MCF 10A (cell line): ENCODE measurements at regions of chr16 and their contacts with region 1.

Region 1: DNA sequence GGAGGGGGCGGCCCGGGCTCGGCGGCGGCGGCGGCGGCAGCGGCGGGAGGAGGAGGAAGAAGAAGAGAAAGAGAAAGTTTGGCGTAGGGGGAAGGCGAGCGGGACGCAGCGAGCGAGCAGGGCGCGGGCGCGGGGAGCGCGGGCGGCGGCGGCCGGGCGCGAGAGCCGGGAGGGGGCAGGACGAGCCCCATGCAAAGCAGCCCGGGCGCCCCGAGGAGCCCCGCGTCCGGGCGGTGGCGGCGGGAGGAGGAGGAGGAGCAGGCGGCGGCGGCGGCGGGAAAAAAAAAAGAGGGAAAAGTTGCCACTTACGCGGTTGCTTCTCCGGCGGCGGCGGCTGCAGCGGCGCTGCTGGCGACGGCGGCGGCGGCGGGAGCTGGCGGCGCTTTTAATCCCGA is 10.3 kb upstream of the ZFHX3 start:
- DNase-seq: peak; percentile 46
- H3K4me3 Mint-ChIP-seq: peak overlapping the region; percentile 87
- H3K27ac Mint-ChIP-seq: no peak overlapping the region
- H3K4me1 Mint-ChIP-seq: peaks cover 38% of the 10 kb centered on the region
- H3K27me3 Mint-ChIP-seq: no peaks in the 10 kb centered on the region
- CTCF ChIP-seq: peak; percentile 11

Region 2: GRCh38 chr16:72876221-72876620 is 182.0 kb before region 1 on chr16:
- CTCF ChIA-PET with region 1: interaction called, 4 read pairs
- POLR2A ChIA-PET with region 1: interaction called, 12 read pairs
- intact Hi-C with region 1: loop called (anchors 2 kb)
- DNase-seq: peak; percentile 77
- H3K4me3 Mint-ChIP-seq: peak overlapping the region; percentile 38
- H3K27ac Mint-ChIP-seq: peak overlapping the region; percentile 93
- H3K4me1 Mint-ChIP-seq: peaks cover 31% of the 10 kb centered on the region
- H3K27me3 Mint-ChIP-seq: no peaks in the 10 kb centered on the region
- CTCF ChIP-seq: no peak

Region 3: GRCh38 chr16:73047518-73048291 is 10.5 kb before region 1 on chr16 and contains the start of gene ZFHX3:
- CTCF ChIA-PET with region 1: interaction called, 3 read pairs
- POLR2A ChIA-PET with region 1: interaction called, 31 read pairs
- intact Hi-C with region 1: no loop called
- DNase-seq: peak; percentile 75
- H3K4me3 Mint-ChIP-seq: peak within 1 kb of the TSS; percentile 89
- H3K27ac Mint-ChIP-seq: peak within 1 kb of the TSS; percentile 73
- H3K4me1 Mint-ChIP-seq: peaks cover 46% of the 10 kb centered on the region
- H3K27me3 Mint-ChIP-seq: no peaks in the 10 kb centered on the region
- CTCF ChIP-seq: peak; percentile 18
- total RNA-seq, gene ZFHX3: 21.1 and 27.4 TPM in 2 replicates

Region 4: GRCh38 chr16:73082608-73083007 is 24.4 kb after region 1 on chr16:
- CTCF ChIA-PET with region 1: interaction called, 5 read pairs
- POLR2A ChIA-PET with region 1: interaction called, 25 read pairs
- intact Hi-C with region 1: no loop called
- DNase-seq: peak; percentile 92
- H3K4me3 Mint-ChIP-seq: peak overlapping the region; percentile 23
- H3K27ac Mint-ChIP-seq: peak overlapping the region; percentile 96
- H3K4me1 Mint-ChIP-seq: no peaks in the 10 kb centered on the region
- H3K27me3 Mint-ChIP-seq: no peaks in the 10 kb centered on the region
- CTCF ChIP-seq: no peak

Region 5: GRCh38 chr16:73126525-73126853 is 68.3 kb after region 1 on chr16:
- CTCF ChIA-PET with region 1: interaction called, 5 read pairs
- POLR2A ChIA-PET with region 1: interaction called, 3 read pairs
- intact Hi-C with region 1: loop called (anchors 5 kb)
- DNase-seq: peak; percentile 93
- H3K4me3 Mint-ChIP-seq: no peak overlapping the region
- H3K27ac Mint-ChIP-seq: no peak overlapping the region
- H3K4me1 Mint-ChIP-seq: peaks cover 22% of the 10 kb centered on the region
- H3K27me3 Mint-ChIP-seq: no peaks in the 10 kb centered on the region
- CTCF ChIP-seq: no peak

Region 6: GRCh38 chr16:73196670-73197069 is 138.5 kb after region 1 on chr16:
- CTCF ChIA-PET with region 1: interaction called, 6 read pairs
- POLR2A ChIA-PET with region 1: no interaction called
- intact Hi-C with region 1: loop called (anchors 5 kb)
- DNase-seq: peak; percentile 85
- H3K4me3 Mint-ChIP-seq: no peak overlapping the region
- H3K27ac Mint-ChIP-seq: no peak overlapping the region
- H3K4me1 Mint-ChIP-seq: no peaks in the 10 kb centered on the region
- H3K27me3 Mint-ChIP-seq: peaks cover 3% of the 10 kb centered on the region
- CTCF ChIP-seq: peak; percentile 79

Region 7: GRCh38 chr16:73447850-73448249 is 389.6 kb after region 1 on chr16:
- CTCF ChIA-PET with region 1: no interaction called
- POLR2A ChIA-PET with region 1: no interaction called
- intact Hi-C with region 1: no loop called
- DNase-seq: no peak
- H3K4me3 Mint-ChIP-seq: no peak overlapping the region
- H3K27ac Mint-ChIP-seq: no peak overlapping the region
- H3K4me1 Mint-ChIP-seq: no peaks in the 10 kb centered on the region
- H3K27me3 Mint-ChIP-seq: peaks cover 50% of the 10 kb centered on the region
- CTCF ChIP-seq: no peak